Activated CD8-positive, alpha-beta T cell treated with anti-CD3 and anti-CD28 coated beads for 36 hours (primary cell): ENCODE measurements at regions of chr10 and their contacts with region 1.

Region 1: GRCh38 chr10:7525314-7526016 is 114.6 kb upstream of the SFMBT2 start:
- DNase-seq: peak; percentile 81
- ATAC-seq: peak; percentile 95
- H3K4me3 Mint-ChIP-seq: no peak overlapping the region
- H3K27ac Mint-ChIP-seq: no peak overlapping the region
- H3K4me1 Mint-ChIP-seq: peaks cover 20% of the 10 kb centered on the region
- H3K27me3 Mint-ChIP-seq: peaks cover 1% of the 10 kb centered on the region
- CTCF ChIP-seq: peak; percentile 82

Region 2: DNA sequence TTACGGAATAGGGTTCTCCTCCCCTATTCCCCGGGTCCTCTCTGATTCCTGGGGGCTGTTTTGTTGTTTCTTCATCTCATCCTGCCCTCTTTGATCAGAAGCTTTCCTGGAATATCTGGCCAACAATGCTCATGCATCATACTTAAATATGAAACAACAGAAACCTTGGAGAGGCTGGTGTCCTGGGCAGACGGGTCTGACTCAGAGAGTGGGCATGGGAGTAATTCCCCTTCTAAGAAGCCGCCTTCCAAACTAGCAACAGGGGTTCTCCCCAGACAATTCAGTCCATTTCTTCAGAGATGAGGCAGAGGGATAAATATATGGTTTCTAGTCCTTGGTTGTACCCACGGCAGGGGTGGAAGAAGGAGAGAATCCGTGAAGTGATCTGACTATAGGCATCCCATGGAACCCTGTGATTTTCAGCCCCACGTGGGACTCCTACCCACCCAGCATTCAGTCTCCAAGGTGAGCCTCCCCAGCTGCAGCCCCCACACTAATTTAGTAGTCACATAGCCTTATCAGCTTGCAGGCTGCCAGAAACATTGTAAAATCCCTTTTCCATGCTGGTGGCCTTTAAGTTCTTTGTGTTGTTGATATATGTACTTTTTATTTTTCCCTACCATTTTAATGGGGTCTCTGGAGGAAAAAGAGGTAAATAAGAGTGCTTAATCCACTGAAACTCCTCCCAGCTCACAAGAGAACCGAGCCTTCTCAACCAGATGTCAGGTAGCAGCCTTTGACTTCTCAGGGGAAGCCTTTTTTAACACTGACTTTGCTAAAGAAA is 233.8 kb before region 1 on chr10:
- CTCF ChIA-PET with region 1: no interaction called
- POLR2A ChIA-PET with region 1: no interaction called
- intact Hi-C with region 1: no loop called
- DNase-seq: no peak
- ATAC-seq: peak; percentile 37
- H3K4me3 Mint-ChIP-seq: no peak overlapping the region
- H3K27ac Mint-ChIP-seq: peak overlapping the region; percentile 42
- H3K4me1 Mint-ChIP-seq: peaks cover 57% of the 10 kb centered on the region
- H3K27me3 Mint-ChIP-seq: no peaks in the 10 kb centered on the region
- CTCF ChIP-seq: no peak

Region 3: GRCh38 chr10:7515439-7515838 is 10.0 kb before region 1 on chr10:
- CTCF ChIA-PET with region 1: interaction called, 20 read pairs
- POLR2A ChIA-PET with region 1: no interaction called
- intact Hi-C with region 1: no loop called
- DNase-seq: no peak
- ATAC-seq: no peak
- H3K4me3 Mint-ChIP-seq: no peak overlapping the region
- H3K27ac Mint-ChIP-seq: no peak overlapping the region
- H3K4me1 Mint-ChIP-seq: peaks cover 26% of the 10 kb centered on the region
- H3K27me3 Mint-ChIP-seq: no peaks in the 10 kb centered on the region
- CTCF ChIP-seq: no peak

Region 4: GRCh38 chr10:7559386-7559785 is 33.9 kb after region 1 on chr10:
- CTCF ChIA-PET with region 1: interaction called, 13 read pairs
- POLR2A ChIA-PET with region 1: no interaction called
- intact Hi-C with region 1: no loop called
- DNase-seq: no peak
- ATAC-seq: no peak
- H3K4me3 Mint-ChIP-seq: no peak overlapping the region
- H3K27ac Mint-ChIP-seq: no peak overlapping the region
- H3K4me1 Mint-ChIP-seq: no peaks in the 10 kb centered on the region
- H3K27me3 Mint-ChIP-seq: peaks cover 5% of the 10 kb centered on the region
- CTCF ChIP-seq: no peak

Region 5: GRCh38 chr10:7687228-7687907 is 161.9 kb after region 1 on chr10:
- CTCF ChIA-PET with region 1: interaction called, 124 read pairs
- POLR2A ChIA-PET with region 1: no interaction called
- intact Hi-C with region 1: loop called (anchors 1 kb)
- DNase-seq: peak; percentile 92
- ATAC-seq: peak; percentile 94
- H3K4me3 Mint-ChIP-seq: no peak overlapping the region
- H3K27ac Mint-ChIP-seq: peak overlapping the region; percentile 9
- H3K4me1 Mint-ChIP-seq: peaks cover 11% of the 10 kb centered on the region
- H3K27me3 Mint-ChIP-seq: no peaks in the 10 kb centered on the region
- CTCF ChIP-seq: peak; percentile 95

Region 6: GRCh38 chr10:9302120-9302746 is 1776.8 kb after region 1 on chr10:
- CTCF ChIA-PET with region 1: interaction called, 9 read pairs
- POLR2A ChIA-PET with region 1: no interaction called
- intact Hi-C with region 1: loop called (anchors 5 kb)
- DNase-seq: peak; percentile 19
- ATAC-seq: peak; percentile 37
- H3K4me3 Mint-ChIP-seq: no peak overlapping the region
- H3K27ac Mint-ChIP-seq: no peak overlapping the region
- H3K4me1 Mint-ChIP-seq: no peaks in the 10 kb centered on the region
- H3K27me3 Mint-ChIP-seq: peaks cover 10% of the 10 kb centered on the region
- CTCF ChIP-seq: peak; percentile 50